IMR-90 (cell line): ENCODE measurements at regions of chr2 and their contacts with region 1.

Region 1: DNA sequence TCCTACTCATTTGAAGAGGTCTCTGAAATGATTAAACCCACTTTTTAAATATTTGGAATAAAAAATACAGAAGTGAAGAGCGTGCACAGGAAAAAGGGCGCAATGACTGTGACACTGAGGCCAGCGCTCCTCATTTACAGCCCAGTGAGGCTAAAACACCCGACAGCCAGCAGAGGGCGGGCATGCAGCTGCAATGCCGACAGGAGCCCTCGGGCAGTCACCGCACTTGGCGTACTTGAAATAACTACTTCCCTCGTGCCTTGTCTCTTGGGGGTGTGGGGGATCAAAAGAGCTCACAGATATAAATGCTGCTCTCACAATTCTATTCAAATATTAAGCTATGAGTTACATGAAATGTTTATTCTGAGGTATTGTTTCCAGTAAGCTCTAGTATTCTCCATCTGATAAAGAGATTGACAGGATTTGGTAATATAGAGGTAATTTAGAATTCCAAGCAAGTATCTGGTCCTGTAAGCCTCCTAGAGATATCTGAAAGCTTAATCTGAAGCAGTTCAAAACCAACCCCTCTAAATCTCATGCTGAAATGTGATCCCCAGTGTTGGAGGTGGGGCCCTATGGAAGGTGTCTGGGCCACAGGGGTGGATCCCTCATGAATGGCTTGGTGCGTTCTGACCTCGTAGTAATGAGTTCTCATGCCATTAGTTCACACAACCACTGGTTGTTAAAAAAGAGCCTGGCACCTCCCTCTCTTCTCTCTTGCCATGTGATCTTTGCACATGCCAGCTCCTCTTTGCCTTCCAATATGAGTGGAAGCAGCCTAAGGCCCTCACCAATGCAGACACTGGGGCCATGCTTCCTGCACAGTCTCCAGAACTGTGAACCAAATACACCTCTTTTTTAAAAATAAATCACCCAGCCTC is 93.6 kb downstream of the ZAP70 start:
- DNase-seq: peak; percentile 69
- ATAC-seq: peak; percentile 98
- H3K4me3 ChIP-seq: no peak overlapping the region
- H3K27ac ChIP-seq: no peak overlapping the region
- H3K4me1 ChIP-seq: 0 out of 2 replicates have a peak, but pooled peaks cover 1% of the 10 kb centered on the region
- H3K27me3 ChIP-seq: no peaks in the 10 kb centered on the region
- CTCF ChIP-seq: peak; percentile 94
- POLR2A ChIP-seq: 0 out of 2 replicates have a peak, but pooled peaks have one; percentile 26
- RAD21 ChIP-seq: peak; percentile 98

Region 2: GRCh38 chr2:98086491-98087446 is 279.8 kb after region 1 on chr2 and contains the start of gene VWA3B:
- CTCF ChIA-PET with region 1: no interaction called
- POLR2A ChIA-PET with region 1: no interaction called
- dilution Hi-C with region 1: no loop called
- in situ Hi-C with region 1: no loop called
- intact Hi-C with region 1: loop called (anchors 5 kb)
- DNase-seq: no peak
- ATAC-seq: peak; percentile 96
- H3K4me3 ChIP-seq: peak within 1 kb of the TSS; percentile 46
- H3K27ac ChIP-seq: no peak within 1 kb of the TSS
- H3K4me1 ChIP-seq: no peaks in the 10 kb centered on the region
- H3K27me3 ChIP-seq: peaks cover 39% of the 10 kb centered on the region
- CTCF ChIP-seq: no peak
- POLR2A ChIP-seq: no peak
- RAD21 ChIP-seq: no peak
- total RNA-seq, gene VWA3B: not detected in 2 replicates

Region 3: DNA sequence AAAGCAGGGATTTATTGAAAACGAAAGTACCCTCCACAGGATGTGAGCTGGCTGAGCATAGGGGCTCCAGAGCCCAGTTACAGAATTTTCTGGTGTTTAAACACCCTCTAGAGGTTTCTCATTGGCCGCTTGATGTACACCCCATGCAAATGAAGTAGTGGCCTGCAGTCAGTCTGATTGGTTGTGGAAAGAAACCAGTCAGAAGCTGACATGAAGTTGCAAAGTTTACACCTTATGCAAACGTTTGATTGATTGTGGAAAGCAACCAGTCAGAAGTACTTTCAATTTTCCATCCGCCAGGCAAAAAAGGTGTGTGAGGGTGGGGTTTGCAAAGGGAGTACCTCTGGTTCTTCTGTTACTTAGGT is 342.3 kb after region 1 on chr2:
- CTCF ChIA-PET with region 1: no interaction called
- POLR2A ChIA-PET with region 1: no interaction called
- dilution Hi-C with region 1: no loop called
- in situ Hi-C with region 1: no loop called
- intact Hi-C with region 1: loop called (anchors 5 kb)
- DNase-seq: peak; percentile 62
- ATAC-seq: peak; percentile 95
- H3K4me3 ChIP-seq: peak overlapping the region; percentile 26; the same call in 1 of the 2 replicates
- H3K27ac ChIP-seq: no peak overlapping the region
- H3K4me1 ChIP-seq: no peaks in the 10 kb centered on the region
- H3K27me3 ChIP-seq: peaks cover 6% of the 10 kb centered on the region
- CTCF ChIP-seq: no peak
- POLR2A ChIP-seq: no peak
- RAD21 ChIP-seq: no peak

Region 4: GRCh38 chr2:98269274-98269673 is 462.3 kb after region 1 on chr2:
- CTCF ChIA-PET with region 1: interaction called, 12 read pairs
- POLR2A ChIA-PET with region 1: no interaction called
- dilution Hi-C with region 1: no loop called
- in situ Hi-C with region 1: loop called (anchors 10 kb)
- intact Hi-C with region 1: loop called (anchors 1 kb)
- DNase-seq: peak; percentile 63
- ATAC-seq: peak; percentile 95
- H3K4me3 ChIP-seq: no peak overlapping the region
- H3K27ac ChIP-seq: no peak overlapping the region
- H3K4me1 ChIP-seq: no peaks in the 10 kb centered on the region
- H3K27me3 ChIP-seq: peaks cover 6% of the 10 kb centered on the region
- CTCF ChIP-seq: peak; percentile 67
- POLR2A ChIP-seq: no peak
- RAD21 ChIP-seq: peak; percentile 71

Region 5: GRCh38 chr2:98379672-98380535 is 572.9 kb after region 1 on chr2:
- CTCF ChIA-PET with region 1: no interaction called
- POLR2A ChIA-PET with region 1: no interaction called
- dilution Hi-C with region 1: no loop called
- in situ Hi-C with region 1: loop called (anchors 5 kb)
- intact Hi-C with region 1: loop called (anchors 1 kb)
- DNase-seq: no peak
- ATAC-seq: no peak
- H3K4me3 ChIP-seq: no peak overlapping the region
- H3K27ac ChIP-seq: no peak overlapping the region
- H3K4me1 ChIP-seq: no peaks in the 10 kb centered on the region
- H3K27me3 ChIP-seq: peaks cover 50% of the 10 kb centered on the region
- CTCF ChIP-seq: no peak
- POLR2A ChIP-seq: no peak
- RAD21 ChIP-seq: no peak

Region 6: GRCh38 chr2:98385050-98385699 is 578.2 kb after region 1 on chr2:
- CTCF ChIA-PET with region 1: no interaction called
- POLR2A ChIA-PET with region 1: no interaction called
- dilution Hi-C with region 1: no loop called
- in situ Hi-C with region 1: loop called (anchors 5 kb)
- intact Hi-C with region 1: loop called (anchors 1 kb)
- DNase-seq: peak; percentile 71
- ATAC-seq: peak; percentile 99
- H3K4me3 ChIP-seq: no peak overlapping the region
- H3K27ac ChIP-seq: no peak overlapping the region
- H3K4me1 ChIP-seq: no peaks in the 10 kb centered on the region
- H3K27me3 ChIP-seq: peaks cover 31% of the 10 kb centered on the region
- CTCF ChIP-seq: peak; percentile 99
- POLR2A ChIP-seq: no peak
- RAD21 ChIP-seq: peak; percentile 99